ENCODE measurements at regions of chr5 and their contacts with region 1.

Region 1: GRCh38 chr5:150357326-150358260 is at the start of gene TCOF1:
- DNase-seq: peak; percentile 100
- ATAC-seq: peak; percentile 93
- H3K4me3 ChIP-seq: peak within 1 kb of the TSS; percentile 94
- H3K27ac ChIP-seq: peak within 1 kb of the TSS; percentile 35
- H3K4me1 ChIP-seq: peaks cover 19% of the 10 kb centered on the region; the same call in 1 of the 2 replicates
- H3K27me3 ChIP-seq: no peaks in the 10 kb centered on the region
- CTCF ChIP-seq: no peak
- total RNA-seq, gene TCOF1: 113 and 149 TPM in 2 replicates

Region 2: GRCh38 chr5:150302301-150303069 is 55.1 kb before region 1 on chr5 and contains the start of gene ARSI:
- CTCF ChIA-PET with region 1: no interaction called
- POLR2A ChIA-PET with region 1: no interaction called
- intact Hi-C with region 1: loop called (anchors 2 kb)
- DNase-seq: peak; percentile 69
- ATAC-seq: peak; percentile 81
- H3K4me3 ChIP-seq: peak within 1 kb of the TSS; percentile 72
- H3K27ac ChIP-seq: no peak within 1 kb of the TSS
- H3K4me1 ChIP-seq: peaks cover 20% of the 10 kb centered on the region
- H3K27me3 ChIP-seq: no peaks in the 10 kb centered on the region
- CTCF ChIP-seq: peak; percentile 61
- total RNA-seq, gene ARSI: 5.9 and 6.3 TPM in 2 replicates

Region 3: GRCh38 chr5:150458819-150459557 is 101.4 kb after region 1 on chr5:
- CTCF ChIA-PET with region 1: no interaction called
- POLR2A ChIA-PET with region 1: no interaction called
- intact Hi-C with region 1: no loop called
- DNase-seq: peak; percentile 90
- ATAC-seq: peak; percentile 95
- H3K4me3 ChIP-seq: no peak overlapping the region
- H3K27ac ChIP-seq: no peak overlapping the region
- H3K4me1 ChIP-seq: no peaks in the 10 kb centered on the region; the same call in 1 of the 2 replicates
- H3K27me3 ChIP-seq: no peaks in the 10 kb centered on the region
- CTCF ChIP-seq: peak; percentile 60